ENCODE measurements at regions of chr3 and their contacts with region 1.

Region 1: DNA sequence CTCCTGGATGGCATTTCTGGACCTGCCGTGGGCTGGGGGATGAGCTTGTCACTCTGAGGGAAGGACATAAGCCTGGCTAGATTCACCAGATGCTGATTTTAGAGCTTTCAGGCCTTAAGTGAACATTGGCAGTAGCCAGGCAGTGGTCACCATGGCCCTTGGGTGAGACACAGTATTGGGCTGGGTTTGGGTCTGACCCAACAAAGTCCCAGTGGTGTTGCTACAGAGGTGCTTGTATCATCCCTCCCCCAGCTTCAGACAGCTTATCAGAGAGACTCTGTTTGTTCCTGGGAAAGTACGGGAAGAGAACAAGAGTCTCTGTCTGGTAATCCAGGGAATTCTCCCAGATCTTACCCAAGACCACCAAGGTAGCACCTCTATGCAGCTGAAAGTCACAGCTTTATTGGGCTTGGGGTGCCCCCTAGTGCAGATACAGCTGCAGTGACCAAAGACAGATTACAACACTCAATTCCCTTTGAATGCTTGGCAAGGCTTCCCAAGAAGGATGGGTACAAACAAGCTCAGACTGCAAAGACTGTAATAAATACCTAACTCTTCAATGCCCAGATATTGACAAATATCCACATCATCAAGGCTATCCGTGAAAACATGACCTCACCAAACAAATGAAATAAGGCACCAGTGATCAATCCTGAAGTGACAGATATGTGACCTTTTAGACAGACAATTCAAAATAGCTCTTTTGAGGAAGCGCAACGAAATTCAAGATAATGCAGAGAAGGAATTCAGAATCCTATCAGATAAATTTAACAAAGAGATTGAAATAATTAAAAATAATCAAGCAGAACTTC is 9.9 kb upstream of the RUVBL1 start:
- DNase-seq: peak; percentile 33 to 66 (median 46)
- H3K4me3 ChIP-seq: no peak overlapping the region
- H3K4me3 Mint-ChIP-seq: no peak overlapping the region
- H3K27ac ChIP-seq: no peak overlapping the region
- H3K27ac Mint-ChIP-seq: peak overlapping the region in 1 of 8 donors; percentile 58
- H3K4me1 ChIP-seq: no peaks in the 10 kb centered on the region
- H3K4me1 Mint-ChIP-seq: no peaks in the 10 kb centered on the region
- H3K27me3 ChIP-seq: no peaks in the 10 kb centered on the region
- H3K27me3 Mint-ChIP-seq: peaks cover 2 to 4% of the 10 kb centered on the region in 2 donors

Region 2: GRCh38 chr3:128075516-128076482 is 57.7 kb before region 1 on chr3:
- CTCF ChIA-PET with region 1: interaction called, 15 read pairs
- POLR2A ChIA-PET with region 1: no interaction called
- DNase-seq: peak; percentile 78 to 86 (median 82)
- H3K4me3 ChIP-seq: peak overlapping the region; percentile 55
- H3K4me3 Mint-ChIP-seq: peak overlapping the region; percentile 53 to 85 (median 71)
- H3K27ac ChIP-seq: peak overlapping the region; percentile 20
- H3K27ac Mint-ChIP-seq: peak overlapping the region in 4 of 8 donors; percentile 26 to 66 (median 52)
- H3K4me1 ChIP-seq: peaks cover 16% of the 10 kb centered on the region
- H3K4me1 Mint-ChIP-seq: peaks cover 6 to 19% (median 8%) of the 10 kb centered on the region in 3 donors
- H3K27me3 ChIP-seq: no peaks in the 10 kb centered on the region
- H3K27me3 Mint-ChIP-seq: peaks cover 0 to 2% of the 10 kb centered on the region in 2 donors

Region 3: GRCh38 chr3:128145337-128145736 is 11.9 kb after region 1 on chr3:
- CTCF ChIA-PET with region 1: interaction called, 10 read pairs
- POLR2A ChIA-PET with region 1: no interaction called
- DNase-seq: no peak
- H3K4me3 ChIP-seq: no peak overlapping the region
- H3K4me3 Mint-ChIP-seq: no peak overlapping the region
- H3K27ac ChIP-seq: no peak overlapping the region
- H3K27ac Mint-ChIP-seq: no peak overlapping the region
- H3K4me1 ChIP-seq: no peaks in the 10 kb centered on the region
- H3K4me1 Mint-ChIP-seq: no peaks in the 10 kb centered on the region
- H3K27me3 ChIP-seq: no peaks in the 10 kb centered on the region
- H3K27me3 Mint-ChIP-seq: peaks cover 0 to 4% of the 10 kb centered on the region in 2 donors

Region 4: DNA sequence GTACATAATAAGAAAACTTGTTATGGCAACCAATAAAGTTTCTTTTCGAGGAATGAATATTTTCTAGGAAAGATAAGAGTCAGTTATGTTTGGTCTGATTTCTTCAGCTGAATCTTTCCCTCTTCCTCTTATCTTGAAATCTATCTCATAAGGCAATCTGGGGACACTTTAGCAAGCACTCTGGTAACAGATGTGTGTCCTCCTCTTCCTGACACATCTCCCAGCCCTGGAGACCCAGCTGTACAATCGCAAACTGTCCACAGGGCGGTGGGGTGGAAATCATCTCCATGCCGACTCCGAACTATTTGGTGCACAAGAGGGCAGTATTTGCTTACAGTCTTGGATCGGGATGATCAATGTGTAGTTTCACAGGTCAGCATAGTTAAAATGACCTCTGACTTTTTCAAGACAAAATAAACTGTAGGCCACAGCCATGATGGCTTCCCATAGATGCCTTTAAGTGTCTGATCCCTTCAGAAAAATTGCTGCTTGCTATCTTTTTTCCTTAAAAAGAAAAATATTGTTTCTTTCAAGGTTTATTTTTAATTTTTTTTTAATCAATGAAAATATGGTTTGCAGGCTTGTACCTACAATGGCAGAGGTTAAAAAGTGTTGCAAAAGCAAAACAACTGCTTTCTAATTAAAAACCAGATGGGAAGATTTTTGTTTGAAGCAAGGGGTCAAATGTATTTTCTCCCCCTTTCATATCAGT is 37.5 kb after region 1 on chr3:
- CTCF ChIA-PET with region 1: no interaction called
- POLR2A ChIA-PET with region 1: no interaction called
- DNase-seq: no peak
- H3K4me3 ChIP-seq: no peak overlapping the region
- H3K4me3 Mint-ChIP-seq: no peak overlapping the region
- H3K27ac ChIP-seq: no peak overlapping the region
- H3K27ac Mint-ChIP-seq: peak overlapping the region in 2 of 8 donors; percentile 5 to 35
- H3K4me1 ChIP-seq: peaks cover 10% of the 10 kb centered on the region
- H3K4me1 Mint-ChIP-seq: peaks cover 23 to 64% (median 50%) of the 10 kb centered on the region in 3 donors
- H3K27me3 ChIP-seq: no peaks in the 10 kb centered on the region
- H3K27me3 Mint-ChIP-seq: no peaks in the 10 kb centered on the region